ENCODE measurements at regions of chr10 and their contacts with region 1.

Region 1: DNA sequence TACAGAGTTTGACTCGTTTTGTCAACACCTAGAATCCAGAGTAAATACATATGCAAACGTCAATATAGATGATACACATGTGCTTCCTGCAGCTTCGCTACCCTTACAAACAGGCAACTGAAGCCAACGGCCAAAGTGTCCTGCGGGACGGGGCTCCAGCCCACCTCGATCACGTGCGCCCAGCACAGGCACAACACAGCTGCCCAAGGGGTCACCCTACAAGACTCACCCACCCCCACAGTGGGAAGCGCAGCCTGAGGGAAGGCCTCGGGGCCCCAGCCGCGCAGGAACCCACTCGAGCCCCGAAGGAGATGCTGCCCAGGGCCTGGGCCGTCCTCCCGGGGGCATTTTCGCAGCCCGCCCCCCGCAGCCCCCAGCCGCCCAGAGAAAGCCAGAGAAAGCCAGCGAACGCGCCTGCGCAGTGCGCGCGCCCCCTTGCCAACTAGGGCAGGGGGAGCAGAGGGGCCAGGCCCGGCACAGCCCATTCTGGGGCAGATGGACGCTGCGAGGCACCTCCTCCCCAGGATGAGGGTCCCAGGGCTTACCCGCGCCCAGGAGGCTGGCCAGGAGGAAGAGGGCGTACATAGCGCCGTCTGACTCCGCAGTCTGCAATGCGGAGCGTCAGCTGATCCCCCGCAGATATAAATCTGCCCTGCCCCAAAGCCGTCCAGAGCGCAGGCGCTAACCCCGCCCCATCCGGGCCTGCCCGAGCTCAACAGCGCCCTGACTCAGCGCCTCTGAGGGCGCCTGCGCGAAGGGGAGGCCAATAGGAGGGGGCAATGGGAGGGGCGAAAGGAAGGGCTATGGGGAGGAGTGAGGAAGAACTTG is at the start of gene PSAP:
- DNase-seq: peak; percentile 99
- ATAC-seq: peak; percentile 99
- H3K4me3 Mint-ChIP-seq: peak within 1 kb of the TSS; percentile 90
- H3K27ac Mint-ChIP-seq: peak within 1 kb of the TSS; percentile 72
- H3K4me1 Mint-ChIP-seq: peaks cover 47% of the 10 kb centered on the region
- H3K27me3 Mint-ChIP-seq: no peaks in the 10 kb centered on the region
- total RNA-seq, gene PSAP: 100 to 109 TPM

Region 2: GRCh38 chr10:70169649-70170364 is 1681.0 kb before region 1 on chr10:
- CTCF ChIA-PET with region 1: no interaction called
- POLR2A ChIA-PET with region 1: no interaction called
- intact Hi-C with region 1: loop called in 1 of 2 experiments (anchors 5 kb)
- DNase-seq: no peak
- ATAC-seq: peak; percentile 5
- H3K4me3 Mint-ChIP-seq: peak overlapping the region; percentile 94
- H3K27ac Mint-ChIP-seq: peak overlapping the region; percentile 84
- H3K4me1 Mint-ChIP-seq: peaks cover 64% of the 10 kb centered on the region
- H3K27me3 Mint-ChIP-seq: no peaks in the 10 kb centered on the region

Region 3: GRCh38 chr10:71531485-71532446 is 319.1 kb before region 1 on chr10:
- CTCF ChIA-PET with region 1: no interaction called
- POLR2A ChIA-PET with region 1: no interaction called
- intact Hi-C with region 1: loop called in 1 of 2 experiments (anchors 2 kb)
- DNase-seq: peak; percentile 73
- ATAC-seq: peak; percentile 98
- H3K4me3 Mint-ChIP-seq: no peak overlapping the region
- H3K27ac Mint-ChIP-seq: peak overlapping the region; percentile 92
- H3K4me1 Mint-ChIP-seq: peaks cover 23% of the 10 kb centered on the region
- H3K27me3 Mint-ChIP-seq: no peaks in the 10 kb centered on the region

Region 4: DNA sequence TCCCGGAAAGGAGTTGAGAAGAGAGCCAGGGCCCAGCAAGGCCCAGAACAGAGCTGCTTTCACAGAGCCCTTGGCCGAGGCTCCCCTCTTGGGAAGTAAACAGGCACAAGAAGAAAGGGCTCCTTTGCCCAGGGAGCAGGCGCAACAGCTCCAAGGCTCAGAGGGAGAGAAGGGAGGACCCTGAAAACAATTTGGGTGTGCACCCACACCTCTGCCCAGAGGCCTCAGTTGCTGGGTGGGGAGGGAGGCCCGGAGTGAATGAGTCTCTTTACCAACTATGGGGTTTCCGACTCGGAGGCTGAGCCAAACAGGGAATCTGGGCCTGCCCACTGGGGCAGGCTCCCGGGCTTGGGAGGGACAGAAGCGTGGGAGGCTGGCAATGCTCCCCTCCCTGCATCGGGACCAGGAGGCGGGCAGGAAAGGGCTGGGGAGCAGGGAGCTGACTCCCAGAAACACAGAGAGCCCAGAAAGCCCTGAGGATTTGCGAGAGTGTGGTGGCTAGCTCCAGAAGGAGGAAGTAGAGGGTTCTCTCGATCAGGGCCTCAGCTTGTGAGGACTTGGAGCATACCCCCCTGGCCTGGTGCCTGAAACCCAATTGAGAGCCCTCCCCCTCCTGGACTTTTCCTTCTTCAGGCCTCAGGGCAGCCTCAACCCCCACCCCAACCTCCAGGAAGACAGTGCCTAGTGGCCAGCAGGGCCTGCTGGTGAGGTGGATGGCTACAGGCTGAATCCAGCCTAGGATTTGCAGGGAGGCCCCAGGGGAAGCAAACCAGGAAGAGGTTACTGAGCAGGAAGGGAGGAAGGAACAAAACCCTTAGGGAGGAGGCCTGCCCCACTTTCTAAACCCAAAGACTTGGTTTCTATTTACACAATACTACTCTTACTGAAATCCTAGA is 137.5 kb before region 1 on chr10:
- CTCF ChIA-PET with region 1: no interaction called
- POLR2A ChIA-PET with region 1: no interaction called
- intact Hi-C with region 1: no loop called
- DNase-seq: peak; percentile 49
- ATAC-seq: peak; percentile 50
- H3K4me3 Mint-ChIP-seq: peak overlapping the region; percentile 61
- H3K27ac Mint-ChIP-seq: peak overlapping the region; percentile 98
- H3K4me1 Mint-ChIP-seq: peaks cover 46% of the 10 kb centered on the region
- H3K27me3 Mint-ChIP-seq: no peaks in the 10 kb centered on the region

Region 5: DNA sequence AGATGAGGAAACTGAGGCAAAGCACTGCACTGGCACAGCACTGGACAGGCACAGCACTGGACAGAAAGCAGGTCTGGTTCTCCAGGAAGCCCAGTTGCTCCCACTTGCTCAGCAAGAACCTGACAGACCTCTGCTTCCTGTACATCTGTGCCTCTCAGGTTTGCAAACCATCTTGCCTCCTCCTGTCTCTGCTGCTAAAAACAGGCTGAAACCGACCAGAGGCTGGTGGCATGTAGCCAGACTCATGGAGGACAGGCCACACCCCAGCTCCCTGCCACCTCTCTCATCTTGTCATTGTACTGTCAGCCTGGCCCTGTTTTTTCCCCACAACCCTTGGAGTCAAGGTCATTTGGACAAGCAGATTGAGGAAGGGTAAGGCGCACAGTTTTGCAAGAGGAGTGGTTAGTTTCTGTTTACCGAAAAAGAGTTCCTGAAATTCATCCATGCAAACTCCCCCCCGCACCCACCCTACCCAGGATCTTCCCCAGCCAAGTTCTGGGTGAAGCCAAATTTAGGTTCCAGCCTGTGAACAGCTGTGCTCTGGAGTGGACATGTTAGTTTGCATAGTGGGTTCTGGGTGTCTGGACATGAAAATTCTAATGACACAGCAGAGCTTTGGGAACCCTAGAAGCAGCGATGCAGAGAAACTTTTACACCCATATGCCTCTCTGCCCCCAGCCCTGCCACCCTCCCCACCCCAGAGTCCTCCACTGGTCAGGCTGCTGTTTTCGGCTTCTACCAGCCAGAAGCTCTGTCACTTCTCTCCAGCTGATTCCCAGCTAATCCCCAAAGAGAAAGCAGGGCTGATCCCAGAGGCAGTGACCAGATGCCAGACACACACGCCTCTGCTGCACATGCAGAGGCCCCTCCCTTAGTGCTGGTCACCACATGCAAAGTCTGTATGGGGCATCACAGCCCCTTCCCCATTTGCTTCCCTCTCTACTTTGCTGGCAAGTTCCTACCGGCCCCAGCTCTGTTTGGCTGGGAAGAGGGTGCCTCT is 122.8 kb before region 1 on chr10:
- CTCF ChIA-PET with region 1: no interaction called
- POLR2A ChIA-PET with region 1: no interaction called
- intact Hi-C with region 1: loop called in 1 of 2 experiments (anchors 1 kb)
- DNase-seq: peak; percentile 86
- ATAC-seq: peak; percentile 45
- H3K4me3 Mint-ChIP-seq: peak overlapping the region; percentile 36
- H3K27ac Mint-ChIP-seq: peak overlapping the region; percentile 96
- H3K4me1 Mint-ChIP-seq: peaks cover 96% of the 10 kb centered on the region
- H3K27me3 Mint-ChIP-seq: no peaks in the 10 kb centered on the region

Region 6: DNA sequence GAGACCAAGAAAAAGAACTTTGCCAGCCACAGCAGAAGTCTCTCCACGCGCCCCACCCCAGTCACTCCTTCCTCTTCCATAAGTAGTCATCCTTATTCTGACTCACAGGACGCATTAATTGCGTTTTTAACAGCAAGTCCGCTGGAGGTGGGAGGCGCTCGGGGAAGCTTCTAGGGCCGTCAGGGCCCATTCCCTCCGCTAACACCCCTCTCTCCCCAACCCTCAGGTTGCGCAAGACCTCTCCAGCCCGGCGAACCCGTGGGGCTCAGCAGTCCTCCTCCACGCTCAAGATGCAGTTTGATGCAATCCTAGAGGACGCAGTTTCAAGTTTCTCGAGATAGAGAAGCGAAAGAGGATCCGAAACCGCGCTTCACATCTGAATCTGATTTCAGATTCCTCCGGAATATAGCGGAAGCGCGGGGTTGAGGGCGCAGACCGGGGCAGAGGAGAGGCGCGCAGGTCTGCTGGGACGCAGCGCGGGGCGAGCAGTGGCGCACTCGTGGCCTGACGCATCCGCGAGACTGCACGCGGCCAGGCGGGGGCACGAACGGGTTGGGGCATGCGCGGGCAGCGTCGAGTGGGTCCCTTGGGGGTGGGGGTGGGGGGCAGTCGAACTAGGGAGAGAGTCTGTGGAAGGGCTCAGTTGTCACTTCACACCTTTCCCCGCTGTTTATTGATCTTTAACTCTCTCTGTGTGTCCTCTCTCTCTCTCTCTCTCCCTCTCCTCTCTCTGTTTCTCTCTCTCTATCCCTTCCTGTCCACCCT is 38.0 kb after region 1 on chr10:
- CTCF ChIA-PET with region 1: interaction called, 3 read pairs
- POLR2A ChIA-PET with region 1: interaction called, 4 read pairs
- intact Hi-C with region 1: loop called (anchors 1 to 5 kb)
- DNase-seq: peak; percentile 84
- ATAC-seq: peak; percentile 95
- H3K4me3 Mint-ChIP-seq: peak overlapping the region; percentile 76
- H3K27ac Mint-ChIP-seq: peak overlapping the region; percentile 78
- H3K4me1 Mint-ChIP-seq: peaks cover 11% of the 10 kb centered on the region
- H3K27me3 Mint-ChIP-seq: peaks cover 3% of the 10 kb centered on the region

Region 7: DNA sequence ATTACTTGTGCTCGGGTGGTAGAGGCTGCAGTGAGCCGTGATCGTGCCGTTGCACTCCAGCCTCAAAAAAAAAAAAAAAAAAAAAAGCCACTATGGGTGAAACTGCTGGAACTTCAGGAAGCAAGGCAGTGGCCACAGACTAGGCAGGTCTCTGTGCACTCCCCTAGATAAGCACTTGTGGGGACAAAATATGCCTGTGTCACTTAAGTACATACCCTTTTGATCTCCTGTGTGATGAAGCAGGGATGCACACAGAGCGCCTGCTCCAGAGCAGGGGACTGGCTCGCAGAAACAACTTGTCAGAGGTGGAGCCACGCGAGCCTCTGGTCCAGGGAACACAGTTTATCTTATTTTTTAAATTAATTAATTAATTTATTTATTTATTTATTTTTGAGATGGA is 43.1 kb after region 1 on chr10:
- CTCF ChIA-PET with region 1: interaction called, 21 read pairs
- POLR2A ChIA-PET with region 1: interaction called, 4 read pairs
- intact Hi-C with region 1: loop called in 1 of 2 experiments (anchors 5 kb)
- DNase-seq: no peak
- ATAC-seq: no peak
- H3K4me3 Mint-ChIP-seq: no peak overlapping the region
- H3K27ac Mint-ChIP-seq: no peak overlapping the region
- H3K4me1 Mint-ChIP-seq: peaks cover 6% of the 10 kb centered on the region
- H3K27me3 Mint-ChIP-seq: peaks cover 3% of the 10 kb centered on the region

Region 8: GRCh38 chr10:72354478-72355213 is 503.8 kb after region 1 on chr10 and contains the start of gene DNAJB12:
- CTCF ChIA-PET with region 1: no interaction called
- POLR2A ChIA-PET with region 1: no interaction called
- intact Hi-C with region 1: loop called in 1 of 2 experiments (anchors 1 kb)
- DNase-seq: peak; percentile 93
- ATAC-seq: peak; percentile 83
- H3K4me3 Mint-ChIP-seq: peak within 1 kb of the TSS; percentile 82
- H3K27ac Mint-ChIP-seq: peak within 1 kb of the TSS; percentile 98
- H3K4me1 Mint-ChIP-seq: peaks cover 35% of the 10 kb centered on the region
- H3K27me3 Mint-ChIP-seq: no peaks in the 10 kb centered on the region
- total RNA-seq, gene DNAJB12: 19.7 to 21.9 TPM